Activated T-helper 2 cell treated with anti-CD3 and anti-CD28 coated beads, Interferon-gamma antibody, Interleukin-2, Interleukin-4, amounts not matched to agents 10 μg/mL and 5 μg/mL and 100 μg/mL, durations not matched to agents 14 hours and 24 hours and 36 hours (primary cell): ENCODE measurements at regions of chr6 and their contacts with region 1.

Region 1: DNA sequence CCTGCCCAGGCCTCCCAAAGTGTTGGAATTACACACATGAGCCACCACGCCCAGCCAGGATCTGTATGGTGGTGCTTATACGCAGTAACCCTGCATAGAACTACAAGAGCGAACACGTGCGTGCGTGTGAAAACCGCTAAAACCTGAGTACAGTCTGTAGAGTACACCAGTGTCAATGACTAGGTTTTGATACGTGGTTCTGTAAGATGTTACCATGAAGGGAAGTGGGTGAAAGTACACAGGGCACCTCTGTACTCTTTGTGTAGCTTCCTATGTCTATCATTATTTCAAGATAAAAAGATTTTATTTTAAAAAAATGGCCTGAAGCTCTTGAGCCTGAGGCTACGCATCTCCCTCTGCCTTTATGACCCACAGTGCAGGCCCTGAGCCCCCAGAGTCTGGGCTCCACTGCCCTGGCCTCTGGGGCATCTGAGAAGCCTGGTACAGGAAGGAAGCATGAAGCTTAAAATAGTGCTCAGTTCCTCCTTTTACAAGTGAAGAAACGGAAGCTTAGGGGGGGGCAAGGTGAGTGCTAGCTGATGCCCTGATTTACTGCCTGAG is 21.6 kb downstream of the LY86 start:
- DNase-seq: no peak
- H3K4me3 Mint-ChIP-seq: no peak overlapping the region
- H3K27ac Mint-ChIP-seq: peak overlapping the region; percentile 84
- H3K4me1 Mint-ChIP-seq: peaks cover 47% of the 10 kb centered on the region
- H3K27me3 Mint-ChIP-seq: no peaks in the 10 kb centered on the region

Region 2: DNA sequence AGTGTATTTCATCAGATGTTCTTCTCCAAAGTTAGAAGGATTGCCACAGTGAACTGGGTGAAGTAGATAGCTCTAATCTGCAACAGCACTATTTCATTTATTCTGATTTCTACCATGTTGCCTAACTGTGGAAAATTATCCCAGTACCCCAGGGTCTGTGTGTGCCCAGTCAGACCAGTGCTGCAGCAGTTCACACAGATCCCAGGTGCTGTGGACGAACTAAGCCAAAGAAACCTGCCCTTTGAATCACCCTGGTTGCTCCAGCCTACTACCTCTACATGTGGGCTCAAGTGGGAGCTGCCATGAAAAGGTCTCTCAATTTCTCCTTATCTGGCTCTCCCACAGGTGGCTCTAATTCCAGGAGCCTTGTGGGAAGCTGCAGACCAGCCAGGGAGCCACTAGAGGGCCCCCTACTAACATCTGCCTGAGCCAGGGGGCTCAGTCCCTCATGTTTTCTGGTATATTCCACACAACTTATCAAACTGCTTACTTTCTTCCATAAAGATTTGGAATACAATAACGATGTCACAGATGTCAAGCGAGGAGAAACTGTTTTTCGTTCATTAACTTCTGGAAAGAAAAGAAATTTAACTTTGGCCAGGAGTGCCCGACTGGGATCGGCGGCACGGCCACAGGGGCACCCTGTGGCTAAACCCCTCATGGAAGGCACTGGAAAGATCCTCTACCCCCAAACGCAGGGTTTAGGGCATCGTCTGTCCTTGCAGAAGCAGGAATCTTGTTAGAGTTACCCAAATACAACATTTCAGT is 53.2 kb before region 1 on chr6:
- intact Hi-C with region 1: loop called (anchors 5 kb)
- DNase-seq: no peak
- H3K4me3 Mint-ChIP-seq: no peak overlapping the region
- H3K27ac Mint-ChIP-seq: no peak overlapping the region
- H3K4me1 Mint-ChIP-seq: peaks cover 46% of the 10 kb centered on the region
- H3K27me3 Mint-ChIP-seq: peaks cover 23% of the 10 kb centered on the region